ENCODE measurements at regions of chr6 and their contacts with region 1.

Region 1: DNA sequence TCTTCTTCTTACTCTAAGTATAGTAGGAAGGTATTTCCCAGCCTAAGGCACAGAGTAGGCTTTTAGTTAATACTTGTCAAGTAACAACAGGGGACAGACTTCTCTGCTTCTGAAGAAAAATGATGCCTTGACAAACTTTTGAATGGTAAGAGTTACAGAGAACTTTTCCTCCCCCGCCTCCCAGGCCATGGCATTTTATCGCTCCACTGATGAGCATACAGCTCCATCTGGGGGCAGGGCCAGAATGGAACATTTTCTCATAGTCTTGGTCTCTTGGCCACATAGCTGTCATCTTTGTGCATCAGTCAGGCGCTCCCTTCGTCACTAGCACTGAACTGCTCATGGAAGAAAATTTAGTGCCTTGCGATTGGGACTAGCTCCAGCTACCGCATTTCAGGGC is 1066.8 kb upstream of the CITED2 start:
- DNase-seq: peak; percentile 26 to 40
- ATAC-seq: peak; percentile 77 to 87
- H3K4me3 ChIP-seq: no peak overlapping the region
- H3K27ac ChIP-seq: peak overlapping the region in 1 of 4 donors; percentile 15
- H3K4me1 ChIP-seq: peaks cover 25 to 32% of the 10 kb centered on the region in 2 donors
- H3K27me3 ChIP-seq: no peaks in the 10 kb centered on the region
- CTCF ChIP-seq: peak; percentile 34 to 59 (median 42)
- POLR2A ChIP-seq: no peak

Region 2: DNA sequence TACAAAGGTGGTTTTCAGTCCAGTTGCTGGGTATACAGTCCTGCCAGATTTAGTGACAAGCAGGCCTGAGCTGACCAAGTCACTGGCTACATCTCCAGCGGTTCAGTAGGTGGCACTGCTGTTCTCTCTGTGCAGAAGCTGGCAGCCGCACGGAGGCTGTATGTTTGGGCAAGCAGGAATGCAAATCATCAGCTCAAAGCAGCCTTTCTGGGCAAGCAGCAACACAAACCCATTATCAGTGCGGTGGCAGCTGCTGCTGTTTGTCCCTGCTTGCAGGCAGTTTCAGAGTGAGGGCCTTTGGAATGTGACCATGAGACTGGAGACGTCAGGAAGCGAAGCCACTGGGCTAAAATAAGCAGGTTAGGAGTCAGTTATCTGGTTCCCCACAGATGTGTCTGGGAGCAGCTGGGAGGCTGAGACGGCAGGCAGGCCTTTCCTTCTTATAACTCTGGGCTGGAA is 1222.0 kb before region 1 on chr6:
- in situ Hi-C with region 1: no loop called
- intact Hi-C with region 1: loop called (anchors 10 kb)
- DNase-seq: peak; percentile 78 to 85
- ATAC-seq: peak; percentile 98 to 99
- H3K4me3 ChIP-seq: peak overlapping the region in 1 of 4 donors; percentile 3
- H3K27ac ChIP-seq: peak overlapping the region; percentile 41 to 76 (median 70)
- H3K4me1 ChIP-seq: peaks cover 0 to 4% of the 10 kb centered on the region in 2 donors
- H3K27me3 ChIP-seq: no peaks in the 10 kb centered on the region
- CTCF ChIP-seq: peak; percentile 73 to 90 (median 82)
- POLR2A ChIP-seq: peak in 1 of 2 donors; percentile 52

Region 3: GRCh38 chr6:139381216-139381865 is 1059.9 kb before region 1 on chr6:
- in situ Hi-C with region 1: loop called in 2 of 4 experiments (anchors 10 kb)
- intact Hi-C with region 1: no loop called
- DNase-seq: no peak
- ATAC-seq: no peak
- H3K4me3 ChIP-seq: no peak overlapping the region
- H3K27ac ChIP-seq: no peak overlapping the region
- H3K4me1 ChIP-seq: peaks cover 10 to 14% of the 10 kb centered on the region in 2 donors
- H3K27me3 ChIP-seq: no peaks in the 10 kb centered on the region
- CTCF ChIP-seq: no peak
- POLR2A ChIP-seq: no peak

Region 4: DNA sequence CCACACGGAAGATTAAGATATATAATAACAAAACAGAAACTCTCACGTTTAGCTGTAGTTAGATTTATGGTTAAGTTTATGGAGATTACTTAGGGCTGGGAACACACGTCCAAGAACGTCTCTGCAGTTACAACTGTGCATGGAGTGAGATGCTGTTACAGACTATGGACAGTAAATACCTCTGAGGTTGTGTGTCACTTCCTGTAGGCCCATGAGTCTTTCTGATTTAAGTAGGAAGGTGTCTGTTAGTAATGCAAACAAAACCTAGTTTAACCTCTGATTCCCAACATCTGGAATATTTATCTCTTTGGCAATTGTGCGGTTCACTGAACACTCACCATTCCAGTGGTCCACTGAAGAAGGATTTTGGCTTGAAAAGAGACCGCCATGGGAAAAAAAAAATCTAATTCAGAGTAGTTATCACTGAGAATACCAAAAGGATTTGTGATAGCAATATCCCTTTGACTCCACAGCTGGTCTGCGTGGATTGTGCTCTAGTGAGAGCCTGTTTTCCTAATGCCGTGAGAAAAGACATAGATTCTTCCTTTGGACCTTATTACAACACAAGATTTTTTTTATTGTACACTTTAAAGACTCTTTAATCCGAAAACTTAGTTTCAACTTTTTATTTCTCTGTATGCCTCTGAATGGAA is 588.6 kb before region 1 on chr6:
- in situ Hi-C with region 1: loop called in 1 of 4 experiments (anchors 25 kb)
- intact Hi-C with region 1: no loop called
- DNase-seq: no peak
- ATAC-seq: no peak
- H3K4me3 ChIP-seq: no peak overlapping the region
- H3K27ac ChIP-seq: no peak overlapping the region
- H3K4me1 ChIP-seq: peaks cover 5 to 6% of the 10 kb centered on the region in 2 donors
- H3K27me3 ChIP-seq: no peaks in the 10 kb centered on the region
- CTCF ChIP-seq: no peak
- POLR2A ChIP-seq: no peak

Region 5: GRCh38 chr6:139881728-139882211 is 559.5 kb before region 1 on chr6:
- in situ Hi-C with region 1: no loop called
- intact Hi-C with region 1: loop called (anchors 1 kb)
- DNase-seq: no peak
- ATAC-seq: peak; percentile 33 to 48
- H3K4me3 ChIP-seq: peak overlapping the region in 1 of 4 donors; percentile 3
- H3K27ac ChIP-seq: peak overlapping the region; percentile 59 to 66 (median 65)
- H3K4me1 ChIP-seq: peaks cover 21 to 27% of the 10 kb centered on the region in 2 donors
- H3K27me3 ChIP-seq: no peaks in the 10 kb centered on the region
- CTCF ChIP-seq: peak in 4 of 5 experiments; percentile 42 to 67 (median 57)
- POLR2A ChIP-seq: no peak

Region 6: DNA sequence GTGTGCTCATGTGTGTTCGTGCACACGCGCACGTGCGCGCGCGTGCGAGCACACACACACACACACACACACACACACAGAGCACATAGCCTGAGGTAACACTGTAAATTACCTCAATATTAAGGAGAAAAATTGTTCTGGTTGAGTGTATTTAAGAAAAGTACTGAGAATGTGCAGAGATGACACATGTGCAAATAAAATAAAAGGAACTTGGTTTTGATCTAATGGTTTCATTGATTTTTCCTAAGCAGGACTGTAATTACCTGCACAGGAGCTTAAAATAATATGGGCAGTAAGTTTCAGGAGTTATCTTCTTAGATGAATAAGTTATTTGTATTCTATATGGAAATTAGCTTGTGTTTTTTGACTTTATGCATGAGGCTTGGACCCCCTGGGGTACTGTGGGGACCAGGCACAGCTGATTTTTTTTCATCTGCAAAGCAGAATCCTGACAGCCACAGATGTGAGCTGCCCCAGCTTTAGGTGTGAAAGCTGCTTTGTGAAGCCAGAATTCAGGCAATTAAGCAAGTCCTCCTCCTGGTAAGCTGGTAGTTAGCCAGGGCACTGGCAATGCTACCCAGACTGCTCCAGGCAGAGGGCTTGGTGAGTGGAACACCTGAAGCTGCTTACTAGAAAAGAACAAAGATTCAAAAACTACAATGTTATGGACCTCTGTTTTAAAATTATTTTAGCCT is 26.1 kb before region 1 on chr6:
- in situ Hi-C with region 1: no loop called
- intact Hi-C with region 1: no loop called
- DNase-seq: no peak
- ATAC-seq: no peak
- H3K4me3 ChIP-seq: no peak overlapping the region
- H3K27ac ChIP-seq: no peak overlapping the region
- H3K4me1 ChIP-seq: no peaks in the 10 kb centered on the region
- H3K27me3 ChIP-seq: no peaks in the 10 kb centered on the region
- CTCF ChIP-seq: no peak
- POLR2A ChIP-seq: no peak

Region 7: GRCh38 chr6:140541288-140541687 is 100.0 kb after region 1 on chr6:
- in situ Hi-C with region 1: no loop called
- intact Hi-C with region 1: no loop called
- DNase-seq: no peak
- ATAC-seq: no peak
- H3K4me3 ChIP-seq: no peak overlapping the region
- H3K27ac ChIP-seq: no peak overlapping the region
- H3K4me1 ChIP-seq: peaks cover 10 to 16% of the 10 kb centered on the region in 2 donors
- H3K27me3 ChIP-seq: no peaks in the 10 kb centered on the region
- CTCF ChIP-seq: no peak
- POLR2A ChIP-seq: no peak

Region 8: DNA sequence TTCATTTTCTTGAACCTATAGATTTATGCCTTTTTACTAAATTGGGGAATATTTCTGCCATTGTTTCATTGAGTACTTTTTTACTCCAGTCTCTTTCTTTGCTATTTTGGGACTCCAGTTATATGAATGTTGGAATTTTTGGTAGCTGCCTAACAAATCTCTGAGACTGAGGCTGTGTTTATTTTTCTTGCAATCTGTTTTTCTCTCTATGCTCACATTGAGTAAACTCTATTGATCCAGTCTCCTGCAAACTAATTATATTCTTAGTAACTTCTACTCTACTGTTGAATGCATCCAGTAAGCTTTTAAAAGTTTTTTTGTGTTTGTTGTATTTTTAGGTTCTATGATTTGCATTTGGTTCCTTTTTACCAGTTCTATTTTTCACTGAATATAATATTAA is 788.0 kb after region 1 on chr6:
- in situ Hi-C with region 1: no loop called
- intact Hi-C with region 1: no loop called
- DNase-seq: no peak
- ATAC-seq: no peak
- H3K4me3 ChIP-seq: no peak overlapping the region
- H3K27ac ChIP-seq: no peak overlapping the region
- H3K4me1 ChIP-seq: no peaks in the 10 kb centered on the region
- H3K27me3 ChIP-seq: no peaks in the 10 kb centered on the region
- CTCF ChIP-seq: no peak
- POLR2A ChIP-seq: no peak

Measured in gastrocnemius medialis (tissue), 4 donors.